Mammary epithelial cell (primary cell): ENCODE measurements at regions of chr22 and their contacts with region 1.

Region 1: GRCh38 chr22:39946503-39947219 is 13.5 kb upstream of the TMA7B start:
- DNase-seq: peak; percentile 46
- H3K4me3 ChIP-seq: no peak overlapping the region
- H3K27ac ChIP-seq: no peak overlapping the region
- H3K4me1 ChIP-seq: peaks cover 13% of the 10 kb centered on the region
- H3K27me3 ChIP-seq: no peaks in the 10 kb centered on the region
- CTCF ChIP-seq: no peak

Region 2: GRCh38 chr22:39880722-39881121 is 65.9 kb before region 1 on chr22:
- CTCF ChIA-PET with region 1: no interaction called
- dilution Hi-C with region 1: no loop called
- in situ Hi-C with region 1: no loop called
- intact Hi-C with region 1: no loop called
- DNase-seq: no peak
- H3K4me3 ChIP-seq: no peak overlapping the region
- H3K27ac ChIP-seq: no peak overlapping the region
- H3K4me1 ChIP-seq: no peaks in the 10 kb centered on the region
- H3K27me3 ChIP-seq: peaks cover 4% of the 10 kb centered on the region
- CTCF ChIP-seq: no peak

Region 3: GRCh38 chr22:39908737-39909136 is 37.9 kb before region 1 on chr22:
- CTCF ChIA-PET with region 1: no interaction called
- dilution Hi-C with region 1: loop called (anchors 5 kb)
- in situ Hi-C with region 1: no loop called
- intact Hi-C with region 1: no loop called
- DNase-seq: peak; percentile 16
- H3K4me3 ChIP-seq: no peak overlapping the region
- H3K27ac ChIP-seq: no peak overlapping the region
- H3K4me1 ChIP-seq: no peaks in the 10 kb centered on the region
- H3K27me3 ChIP-seq: no peaks in the 10 kb centered on the region
- CTCF ChIP-seq: no peak

Region 4: GRCh38 chr22:40044102-40044869 is 97.6 kb after region 1 on chr22:
- CTCF ChIA-PET with region 1: no interaction called
- dilution Hi-C with region 1: no loop called
- in situ Hi-C with region 1: no loop called
- intact Hi-C with region 1: no loop called
- DNase-seq: peak; percentile 99
- H3K4me3 ChIP-seq: peak overlapping the region; percentile 78 to 97 (median 90)
- H3K27ac ChIP-seq: peak overlapping the region; percentile 80
- H3K4me1 ChIP-seq: peaks cover 44% of the 10 kb centered on the region
- H3K27me3 ChIP-seq: no peaks in the 10 kb centered on the region
- CTCF ChIP-seq: no peak